HEK293 (cell line): ENCODE measurements at regions of chr3 and their contacts with region 1.

Region 1: DNA sequence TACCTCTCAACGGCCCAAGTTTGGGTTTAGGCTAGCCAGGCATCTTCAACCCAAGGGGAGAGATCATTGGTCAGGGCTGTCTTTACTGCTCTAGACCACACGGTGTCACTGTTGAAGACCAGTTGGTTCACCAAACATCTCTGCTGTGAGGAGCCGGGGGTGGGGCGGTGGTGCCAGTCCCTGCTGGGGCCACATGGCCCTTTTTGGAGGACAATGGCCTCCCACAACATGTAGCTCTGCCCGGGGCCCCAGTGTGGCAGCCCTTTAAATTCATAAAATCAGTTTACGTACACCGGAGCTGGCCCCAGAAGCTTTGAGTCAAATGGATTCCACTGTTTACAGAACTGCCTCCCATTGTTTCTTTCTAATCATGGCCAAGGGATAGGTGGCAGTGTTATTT is 19.1 kb upstream of the TM4SF18 start:
- H3K4me3 ChIP-seq: no peak overlapping the region
- H3K27ac ChIP-seq: no peak overlapping the region
- H3K4me1 ChIP-seq: no peaks in the 10 kb centered on the region
- CTCF ChIP-seq: no peak

Region 2: GRCh38 chr3:149480325-149481017 is 127.9 kb after region 1 on chr3:
- CTCF ChIA-PET with region 1: interaction called, 12 read pairs
- POLR2A ChIA-PET with region 1: no interaction called
- H3K4me3 ChIP-seq: no peak overlapping the region
- H3K27ac ChIP-seq: no peak overlapping the region
- H3K4me1 ChIP-seq: no peaks in the 10 kb centered on the region
- CTCF ChIP-seq: peak; percentile 42; the same call in 1 of the 2 replicates

Region 3: GRCh38 chr3:149487598-149488197 is 135.1 kb after region 1 on chr3:
- CTCF ChIA-PET with region 1: interaction called, 15 read pairs
- POLR2A ChIA-PET with region 1: no interaction called
- H3K4me3 ChIP-seq: no peak overlapping the region
- H3K27ac ChIP-seq: no peak overlapping the region
- H3K4me1 ChIP-seq: no peaks in the 10 kb centered on the region
- CTCF ChIP-seq: no peak